ENCODE measurements at regions of chr1 and their contacts with region 1.

Region 1: GRCh38 chr1:30779294-30780071 is 21.9 kb upstream of the LAPTM5 start:
- DNase-seq: no peak
- ATAC-seq: peak; percentile 87
- H3K4me3 ChIP-seq: no peak overlapping the region
- H3K27ac ChIP-seq: no peak overlapping the region
- H3K4me1 ChIP-seq: peaks cover 21% of the 10 kb centered on the region
- H3K27me3 ChIP-seq: no peaks in the 10 kb centered on the region
- CTCF ChIP-seq: peak; percentile 91 to 97 (median 97)
- EP300 ChIP-seq: no peak
- POLR2A ChIP-seq: no peak
- RAD21 ChIP-seq: peak; percentile 99

Region 2: GRCh38 chr1:30732277-30732996 is 47.0 kb before region 1 on chr1:
- CTCF ChIA-PET with region 1: interaction called, 221 read pairs
- POLR2A ChIA-PET with region 1: interaction called, 23 read pairs
- RAD21 ChIA-PET with region 1: interaction called, 538 read pairs
- SMC1A ChIA-PET with region 1: interaction called, 427 read pairs
- in situ Hi-C with region 1: loop called (anchors 10 kb)
- intact Hi-C with region 1: no loop called
- DNase-seq: no peak
- ATAC-seq: peak; percentile 63
- H3K4me3 ChIP-seq: no peak overlapping the region
- H3K27ac ChIP-seq: no peak overlapping the region
- H3K4me1 ChIP-seq: peaks cover 23% of the 10 kb centered on the region
- H3K27me3 ChIP-seq: no peaks in the 10 kb centered on the region
- CTCF ChIP-seq: no peak
- EP300 ChIP-seq: no peak
- POLR2A ChIP-seq: peak; percentile 62; the same call in 1 of the 2 replicates
- RAD21 ChIP-seq: no peak

Region 3: GRCh38 chr1:30756545-30757195 is 22.8 kb before region 1 on chr1:
- CTCF ChIA-PET with region 1: interaction called, 161 read pairs
- POLR2A ChIA-PET with region 1: interaction called, 42 read pairs
- RAD21 ChIA-PET with region 1: interaction called, 198 read pairs
- SMC1A ChIA-PET with region 1: interaction called, 248 read pairs
- in situ Hi-C with region 1: no loop called
- intact Hi-C with region 1: loop called (anchors 1 kb)
- DNase-seq: no peak
- ATAC-seq: peak; percentile 16
- H3K4me3 ChIP-seq: peak overlapping the region; percentile 98
- H3K27ac ChIP-seq: peak overlapping the region; percentile 93
- H3K4me1 ChIP-seq: peaks cover 48% of the 10 kb centered on the region
- H3K27me3 ChIP-seq: no peaks in the 10 kb centered on the region
- CTCF ChIP-seq: no peak
- EP300 ChIP-seq: peak in 1 of 2 experiments; percentile 59; a peak in 1 of 4 replicates
- POLR2A ChIP-seq: no peak; the same call in 1 of the 2 replicates
- RAD21 ChIP-seq: no peak

Region 4: GRCh38 chr1:30790850-30791778 is 11.6 kb after region 1 on chr1:
- CTCF ChIA-PET with region 1: interaction called, 17 read pairs
- POLR2A ChIA-PET with region 1: no interaction called
- RAD21 ChIA-PET with region 1: interaction called, 6 read pairs
- SMC1A ChIA-PET with region 1: interaction called, 8 read pairs
- in situ Hi-C with region 1: no loop called
- intact Hi-C with region 1: no loop called
- DNase-seq: peak; percentile 41
- ATAC-seq: peak; percentile 79
- H3K4me3 ChIP-seq: no peak overlapping the region
- H3K27ac ChIP-seq: 0 out of 2 replicates have a peak overlapping the region, but pooled peaks have one; percentile 24
- H3K4me1 ChIP-seq: peaks cover 7% of the 10 kb centered on the region
- H3K27me3 ChIP-seq: no peaks in the 10 kb centered on the region; a peak in 1 of 4 replicates
- CTCF ChIP-seq: no peak
- EP300 ChIP-seq: no peak
- POLR2A ChIP-seq: no peak
- RAD21 ChIP-seq: no peak

Region 5: DNA sequence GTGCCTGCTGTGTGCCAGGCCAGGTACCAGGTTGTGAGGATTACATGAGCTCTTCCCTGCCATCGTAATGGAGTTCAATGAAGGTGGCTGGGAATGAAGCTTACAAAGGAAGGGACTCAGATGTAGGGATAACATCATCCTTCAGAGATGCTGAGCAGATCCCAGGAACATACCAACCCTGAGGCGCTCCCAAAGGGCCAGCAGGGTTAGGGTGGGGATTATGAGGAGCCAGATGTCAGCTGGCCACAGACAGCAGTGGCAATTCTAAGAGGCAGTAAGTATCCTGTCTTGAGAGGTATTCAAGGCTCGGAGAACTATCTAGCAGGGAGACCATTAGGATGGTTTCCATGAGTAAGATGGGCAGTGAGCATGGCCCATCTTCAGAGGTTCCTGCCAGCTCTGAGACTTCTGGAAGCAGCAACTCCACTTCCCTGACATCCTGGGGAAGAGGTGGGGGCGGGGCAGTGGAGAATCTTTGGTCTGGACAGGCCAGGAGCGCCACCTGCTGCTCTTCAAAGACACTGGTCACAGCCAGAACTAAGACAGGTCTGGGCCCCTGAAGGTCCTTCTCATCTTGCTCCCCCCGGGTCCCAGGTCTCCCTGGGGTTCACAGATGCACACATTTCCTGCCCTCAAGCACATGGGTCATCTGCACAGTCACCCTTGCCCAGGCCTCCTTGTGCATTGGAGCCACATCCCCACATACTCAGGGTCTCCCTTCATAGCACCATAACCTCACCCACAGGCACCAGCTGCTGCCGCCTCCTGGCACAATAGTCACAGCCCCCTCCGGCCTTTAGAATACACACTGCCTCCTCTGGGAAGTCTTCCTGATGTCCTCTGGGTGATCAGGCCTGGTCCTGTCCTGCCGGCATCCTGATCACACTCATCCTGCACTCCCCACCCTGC is 131.8 kb after region 1 on chr1:
- CTCF ChIA-PET with region 1: interaction called, 89 read pairs
- POLR2A ChIA-PET with region 1: interaction called, 4 read pairs
- RAD21 ChIA-PET with region 1: interaction called, 41 read pairs
- SMC1A ChIA-PET with region 1: interaction called, 49 read pairs
- in situ Hi-C with region 1: no loop called
- intact Hi-C with region 1: loop called (anchors 1 kb)
- DNase-seq: no peak
- ATAC-seq: peak; percentile 84
- H3K4me3 ChIP-seq: no peak overlapping the region
- H3K27ac ChIP-seq: no peak overlapping the region
- H3K4me1 ChIP-seq: no peaks in the 10 kb centered on the region
- H3K27me3 ChIP-seq: peaks cover 16% of the 10 kb centered on the region in 2 experiments
- CTCF ChIP-seq: peak; percentile 71 to 82 (median 79)
- EP300 ChIP-seq: no peak
- POLR2A ChIP-seq: no peak
- RAD21 ChIP-seq: peak; percentile 88